CD8-positive, alpha-beta memory T cell (primary cell): ENCODE measurements at regions of chr11 and their contacts with region 1.

Region 1: GRCh38 chr11:76919887-76920746 is 59.4 kb downstream of the ACER3 start:
- DNase-seq: peak; percentile 29 to 65 (median 62)
- H3K4me3 ChIP-seq: peak overlapping the region; percentile 15
- H3K4me3 Mint-ChIP-seq: peak overlapping the region in 6 of 7 donors; percentile 67 to 79 (median 72)
- H3K27ac ChIP-seq: no peak overlapping the region
- H3K27ac Mint-ChIP-seq: peak overlapping the region in 2 of 8 donors; percentile 35 to 75
- H3K4me1 ChIP-seq: peaks cover 5% of the 10 kb centered on the region
- H3K4me1 Mint-ChIP-seq: peaks cover 6 to 15% (median 13%) of the 10 kb centered on the region in 3 donors
- H3K27me3 ChIP-seq: no peaks in the 10 kb centered on the region
- H3K27me3 Mint-ChIP-seq: no peaks in the 10 kb centered on the region

Region 2: GRCh38 chr11:76888989-76889388 is 31.1 kb before region 1 on chr11:
- CTCF ChIA-PET with region 1: interaction called, 10 read pairs
- POLR2A ChIA-PET with region 1: no interaction called
- DNase-seq: no peak
- H3K4me3 ChIP-seq: no peak overlapping the region
- H3K4me3 Mint-ChIP-seq: no peak overlapping the region
- H3K27ac ChIP-seq: peak overlapping the region; percentile 18
- H3K27ac Mint-ChIP-seq: peak overlapping the region in 1 of 8 donors; percentile 57
- H3K4me1 ChIP-seq: no peaks in the 10 kb centered on the region
- H3K4me1 Mint-ChIP-seq: peaks cover 2 to 15% (median 12%) of the 10 kb centered on the region in 3 donors
- H3K27me3 ChIP-seq: no peaks in the 10 kb centered on the region
- H3K27me3 Mint-ChIP-seq: peaks cover 0 to 1% of the 10 kb centered on the region in 2 donors